ENCODE measurements at regions of chr11 and their contacts with region 1.

Region 1: GRCh38 chr11:2532704-2533586 is 88.1 kb downstream of the KCNQ1 start:
- DNase-seq: peak; percentile 93 to 94
- H3K4me3 ChIP-seq: no peak overlapping the region
- H3K27ac ChIP-seq: peak overlapping the region; percentile 69 to 84
- H3K4me1 ChIP-seq: peaks cover 0 to 11% of the 10 kb centered on the region in 2 donors
- H3K27me3 ChIP-seq: no peaks in the 10 kb centered on the region
- CTCF ChIP-seq: peak; percentile 100
- POLR2A ChIP-seq: peak in 1 of 2 donors; percentile 43

Region 2: DNA sequence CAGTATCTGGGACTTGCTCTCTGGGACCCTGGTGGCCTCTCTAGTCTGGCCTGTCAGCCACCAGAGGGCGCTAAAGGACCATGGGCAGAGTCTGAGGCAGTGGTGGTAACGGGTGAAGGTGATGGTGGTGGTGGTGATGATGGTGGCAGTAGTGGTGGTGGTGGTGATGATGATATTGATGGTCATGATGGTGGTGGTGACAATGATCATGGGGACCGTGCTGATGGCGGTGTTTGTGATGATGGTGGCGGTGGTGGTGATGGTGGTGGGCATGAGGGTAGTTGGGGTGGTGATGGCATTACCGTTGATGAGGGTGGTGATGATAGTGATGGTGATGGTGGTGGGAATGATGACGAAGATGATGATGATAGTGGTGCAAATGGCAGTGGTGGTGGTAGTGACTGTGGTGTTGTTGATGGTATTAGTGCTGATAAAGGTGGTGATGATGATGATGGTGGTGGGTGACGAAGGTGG is 104.6 kb before region 1 on chr11:
- intact Hi-C with region 1: loop called (anchors 2 kb)
- DNase-seq: peak in 1 of 2 donors; percentile 50
- H3K4me3 ChIP-seq: no peak overlapping the region
- H3K27ac ChIP-seq: no peak overlapping the region
- H3K4me1 ChIP-seq: no peaks in the 10 kb centered on the region
- H3K27me3 ChIP-seq: no peaks in the 10 kb centered on the region
- CTCF ChIP-seq: peak; percentile 46 to 89 (median 73)
- POLR2A ChIP-seq: no peak

Region 3: GRCh38 chr11:2892215-2893020 is 359.5 kb after region 1 on chr11:
- intact Hi-C with region 1: loop called (anchors 2 kb)
- DNase-seq: peak; percentile 60 to 66
- H3K4me3 ChIP-seq: peak overlapping the region; percentile 31 to 32
- H3K27ac ChIP-seq: peak overlapping the region; percentile 90
- H3K4me1 ChIP-seq: peaks cover 15 to 17% of the 10 kb centered on the region in 2 donors
- H3K27me3 ChIP-seq: no peaks in the 10 kb centered on the region
- CTCF ChIP-seq: peak; percentile 95 to 98 (median 96)
- POLR2A ChIP-seq: no peak